ENCODE measurements at regions of chr11 and their contacts with region 1.

Region 1: DNA sequence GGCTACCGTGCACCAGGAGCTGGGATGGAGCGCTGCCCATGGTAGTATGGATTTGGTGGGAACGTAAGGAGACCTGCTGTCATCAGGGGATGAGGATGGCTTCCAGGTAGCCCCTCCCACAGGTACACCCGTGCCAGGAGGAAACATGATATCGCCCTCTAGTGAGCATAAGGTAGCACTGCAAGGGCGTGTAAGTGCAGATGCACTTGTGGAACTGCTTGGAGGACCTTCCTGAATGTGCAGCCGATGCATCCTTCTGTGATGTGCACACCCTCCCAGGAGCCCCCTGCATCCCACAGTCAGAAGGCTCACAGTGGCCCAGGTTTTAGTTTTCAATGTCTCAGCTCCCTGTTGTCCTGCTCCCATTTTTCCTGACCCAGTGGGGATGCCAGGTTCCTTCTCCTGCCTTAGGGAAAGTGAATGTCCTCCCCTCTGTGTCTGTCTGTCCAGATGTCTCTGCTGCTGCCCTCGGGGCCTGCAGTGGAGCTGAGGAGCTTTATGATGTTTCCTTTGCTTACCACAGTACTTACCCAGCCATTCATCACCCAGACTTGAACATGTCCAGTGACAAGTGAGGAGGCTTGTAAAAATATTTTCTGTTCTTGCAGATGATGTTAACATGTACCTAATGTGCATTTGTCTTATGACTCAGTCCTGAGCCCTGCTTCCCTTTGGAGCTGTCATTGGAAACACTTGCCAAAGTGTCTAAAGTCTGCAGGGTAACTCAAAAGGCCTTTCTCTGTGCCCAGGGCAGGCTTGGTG is 49.2 kb downstream of the DBX1 start:
- DNase-seq: peak; percentile 65
- H3K4me3 Mint-ChIP-seq: no peak overlapping the region
- H3K27ac Mint-ChIP-seq: no peak overlapping the region
- H3K4me1 Mint-ChIP-seq: no peaks in the 10 kb centered on the region
- H3K27me3 Mint-ChIP-seq: peaks cover 2% of the 10 kb centered on the region

Region 2: GRCh38 chr11:19049351-19049750 is 1061.7 kb before region 1 on chr11:
- CTCF ChIA-PET with region 1: no interaction called
- POLR2A ChIA-PET with region 1: no interaction called
- intact Hi-C with region 1: no loop called
- DNase-seq: no peak
- H3K4me3 Mint-ChIP-seq: no peak overlapping the region
- H3K27ac Mint-ChIP-seq: no peak overlapping the region
- H3K4me1 Mint-ChIP-seq: no peaks in the 10 kb centered on the region
- H3K27me3 Mint-ChIP-seq: peaks cover 8% of the 10 kb centered on the region

Region 3: DNA sequence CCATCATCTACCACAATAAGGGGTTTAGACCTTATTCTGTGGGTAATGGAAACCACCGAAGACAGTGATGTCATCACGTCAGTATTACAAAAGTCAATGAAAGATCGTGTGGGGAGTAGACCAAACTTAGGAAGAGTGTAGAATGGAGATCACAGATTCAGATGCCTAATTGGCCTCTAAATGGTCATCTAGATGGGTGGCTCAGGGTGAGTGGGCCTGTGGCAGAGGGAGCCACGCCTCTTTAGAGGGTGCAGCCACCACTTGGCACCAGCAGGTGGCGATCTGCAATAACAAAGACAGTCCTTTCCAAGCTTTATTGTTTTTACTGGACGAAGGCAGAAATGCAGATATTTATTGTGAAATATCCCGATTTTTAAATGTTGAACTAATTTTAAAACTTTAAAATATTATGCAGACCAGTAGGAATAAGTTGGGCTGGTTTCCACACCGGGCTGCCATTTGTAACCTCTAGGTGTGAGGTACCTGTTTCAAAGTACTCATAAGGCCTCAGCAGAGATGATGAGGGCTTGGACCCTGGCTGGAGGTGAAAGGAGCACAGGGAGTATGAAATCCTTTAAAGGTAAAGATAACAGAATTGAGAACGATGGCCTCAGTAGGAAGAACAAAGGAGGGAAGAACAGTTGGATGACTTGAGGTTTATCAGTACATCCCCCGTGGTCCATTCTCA is 172.8 kb before region 1 on chr11:
- CTCF ChIA-PET with region 1: interaction called, 5 read pairs
- POLR2A ChIA-PET with region 1: no interaction called
- intact Hi-C with region 1: loop called (anchors 1 kb)
- DNase-seq: peak; percentile 59
- H3K4me3 Mint-ChIP-seq: no peak overlapping the region
- H3K27ac Mint-ChIP-seq: no peak overlapping the region
- H3K4me1 Mint-ChIP-seq: no peaks in the 10 kb centered on the region
- H3K27me3 Mint-ChIP-seq: no peaks in the 10 kb centered on the region

Region 4: GRCh38 chr11:20013346-20014066 is 97.6 kb before region 1 on chr11:
- CTCF ChIA-PET with region 1: no interaction called
- POLR2A ChIA-PET with region 1: no interaction called
- intact Hi-C with region 1: no loop called
- DNase-seq: no peak
- H3K4me3 Mint-ChIP-seq: no peak overlapping the region
- H3K27ac Mint-ChIP-seq: no peak overlapping the region
- H3K4me1 Mint-ChIP-seq: no peaks in the 10 kb centered on the region
- H3K27me3 Mint-ChIP-seq: peaks cover 5% of the 10 kb centered on the region

Measured in activated CD4-positive, alpha-beta memory T cell treated with anti-CD3 and anti-CD28 coated beads for 36 hours (primary cell).